Activated T-helper 1 cell treated with anti-CD3 and anti-CD28 coated beads, Interleukin-12 subunit alpha, Interleukin-12 subunit beta, Interleukin-2, Interleukin-4 antibody, amounts not matched to agents 30 ng/mL and 10 ng/mL and 1 ng/mL, durations not matched to agents 14 hours and 24 hours and 36 hours (primary cell): ENCODE measurements at regions of chr5 and their contacts with region 1.

Region 1: DNA sequence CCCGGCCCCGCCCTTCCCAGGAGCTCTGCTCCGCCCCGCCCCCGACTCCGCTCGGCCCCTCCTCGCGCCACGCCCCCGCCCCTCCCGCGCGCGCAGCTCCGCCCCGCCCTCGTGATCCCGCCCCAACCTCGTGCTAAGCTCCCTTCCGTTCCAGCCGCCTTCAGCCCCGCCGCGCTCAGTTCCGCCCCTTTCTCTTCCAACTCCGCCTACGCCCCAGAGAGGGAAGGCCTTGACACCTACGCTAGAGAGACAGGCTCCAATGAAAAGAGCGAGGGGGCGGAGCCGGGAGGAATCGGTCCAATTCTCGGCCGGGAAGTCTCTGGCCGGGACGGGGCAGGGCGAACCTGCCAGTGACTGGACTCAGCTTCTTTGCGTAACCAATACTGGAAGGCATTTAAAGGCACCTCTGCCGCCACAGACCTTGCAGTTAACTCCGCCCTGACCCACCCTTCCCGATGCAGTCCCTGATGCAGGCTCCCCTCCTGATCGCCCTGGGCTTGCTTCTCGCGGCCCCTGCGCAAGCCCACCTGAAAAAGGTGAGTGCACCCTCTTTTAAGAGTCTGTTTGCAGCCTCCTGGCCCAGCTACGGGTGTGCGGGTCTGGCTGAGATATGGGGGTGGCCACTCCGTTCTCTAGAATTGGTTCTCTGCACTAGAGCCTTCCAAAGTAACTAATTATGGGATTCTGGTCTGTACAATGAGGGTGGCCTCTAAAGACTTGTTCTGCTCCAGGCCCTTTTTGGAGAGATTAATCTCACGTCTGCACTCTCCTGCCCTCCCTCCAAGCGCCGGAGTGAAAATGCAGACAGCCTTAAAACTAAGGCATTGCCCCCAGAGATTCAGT is at the start of gene GM2A:
- DNase-seq: peak; percentile 99
- H3K4me3 Mint-ChIP-seq: peak within 1 kb of the TSS; percentile 87
- H3K27ac Mint-ChIP-seq: peak within 1 kb of the TSS; percentile 88
- H3K4me1 Mint-ChIP-seq: peaks cover 44% of the 10 kb centered on the region
- H3K27me3 Mint-ChIP-seq: peaks cover 2% of the 10 kb centered on the region
- total RNA-seq, gene GM2A: 16.9 and 21.1 TPM in 2 replicates

Region 2: DNA sequence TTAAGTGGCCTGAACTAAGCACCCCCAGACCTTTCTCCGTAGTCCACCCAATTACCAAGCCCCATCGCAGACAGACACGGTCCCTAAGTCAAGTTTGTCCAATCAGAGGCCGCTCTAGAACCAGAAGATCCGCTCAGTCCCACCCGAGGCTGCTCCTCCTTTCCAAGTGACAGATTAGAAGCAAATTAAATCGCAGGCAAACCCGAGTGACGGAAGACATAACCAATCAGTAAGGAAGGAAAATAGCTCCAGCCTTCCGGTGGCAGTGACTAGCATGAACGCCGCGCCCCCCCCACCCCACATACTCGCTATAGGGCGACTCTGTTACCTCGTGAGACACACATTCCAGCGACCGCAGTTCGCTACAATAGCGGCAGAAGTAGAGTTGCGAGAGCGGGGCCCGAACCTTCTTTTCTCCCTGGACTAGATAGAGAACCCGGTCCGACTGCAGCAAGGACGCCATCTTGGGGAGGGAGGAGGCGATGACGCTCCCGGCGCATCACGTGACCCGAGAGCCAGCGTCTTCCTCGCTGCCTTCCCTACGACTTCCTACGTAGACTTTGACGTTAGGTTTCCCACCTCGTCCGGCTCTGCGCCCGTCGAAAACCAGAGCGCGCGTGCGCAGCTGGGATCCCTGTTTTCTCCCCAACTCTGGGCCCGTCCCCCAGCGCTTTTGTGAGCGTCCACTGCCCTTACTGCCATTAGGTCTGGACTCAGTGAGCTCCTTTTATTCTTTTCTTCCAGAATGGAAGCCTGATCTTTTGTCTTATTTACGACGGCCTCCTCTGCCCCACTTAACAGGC is 494.3 kb before region 1 on chr5 and contains the start of gene DCTN4:
- intact Hi-C with region 1: loop called (anchors 5 kb)
- DNase-seq: peak; percentile 90
- H3K4me3 Mint-ChIP-seq: no peak within 1 kb of the TSS
- H3K27ac Mint-ChIP-seq: no peak within 1 kb of the TSS
- H3K4me1 Mint-ChIP-seq: peaks cover 34% of the 10 kb centered on the region
- H3K27me3 Mint-ChIP-seq: peaks cover 2% of the 10 kb centered on the region
- total RNA-seq, gene DCTN4: 42.3 and 46.4 TPM in 2 replicates

Region 3: GRCh38 chr5:151213800-151214613 is 39.0 kb before region 1 on chr5:
- intact Hi-C with region 1: loop called (anchors 1 kb)
- DNase-seq: peak; percentile 83
- H3K4me3 Mint-ChIP-seq: peak overlapping the region; percentile 87
- H3K27ac Mint-ChIP-seq: peak overlapping the region; percentile 93
- H3K4me1 Mint-ChIP-seq: peaks cover 81% of the 10 kb centered on the region
- H3K27me3 Mint-ChIP-seq: no peaks in the 10 kb centered on the region

Region 4: GRCh38 chr5:151234476-151235238 is 18.3 kb before region 1 on chr5:
- intact Hi-C with region 1: no loop called
- DNase-seq: no peak
- H3K4me3 Mint-ChIP-seq: no peak overlapping the region
- H3K27ac Mint-ChIP-seq: no peak overlapping the region
- H3K4me1 Mint-ChIP-seq: peaks cover 18% of the 10 kb centered on the region
- H3K27me3 Mint-ChIP-seq: no peaks in the 10 kb centered on the region

Region 5: DNA sequence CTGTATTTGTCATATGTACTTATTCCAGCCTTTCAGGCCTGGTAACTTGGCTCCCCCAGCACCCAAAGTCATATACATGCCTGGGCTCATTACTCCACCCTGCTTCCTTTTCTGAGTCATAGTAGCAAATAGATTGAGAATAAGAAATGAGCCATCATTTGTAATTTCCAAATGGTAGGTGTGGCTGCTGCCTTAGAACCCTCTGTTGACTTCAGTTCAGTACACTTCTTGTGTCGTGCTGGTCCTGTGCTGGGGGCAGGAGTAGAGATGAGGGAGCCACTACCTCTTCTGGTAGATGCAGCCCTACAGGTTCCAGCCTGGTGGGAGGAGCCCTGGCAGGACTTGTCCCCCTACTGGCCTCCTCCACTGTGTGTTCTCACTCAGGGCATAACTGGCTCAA is 11.1 kb after region 1 on chr5:
- intact Hi-C with region 1: loop called (anchors 1 kb)
- DNase-seq: no peak
- H3K4me3 Mint-ChIP-seq: no peak overlapping the region
- H3K27ac Mint-ChIP-seq: peak overlapping the region; percentile 84
- H3K4me1 Mint-ChIP-seq: peaks cover 13% of the 10 kb centered on the region
- H3K27me3 Mint-ChIP-seq: no peaks in the 10 kb centered on the region

Region 6: GRCh38 chr5:151447174-151448037 is 194.4 kb after region 1 on chr5 and contains the start of gene SLC36A1:
- intact Hi-C with region 1: loop called (anchors 5 kb)
- DNase-seq: peak; percentile 88
- H3K4me3 Mint-ChIP-seq: peak within 1 kb of the TSS; percentile 98
- H3K27ac Mint-ChIP-seq: peak within 1 kb of the TSS; percentile 96
- H3K4me1 Mint-ChIP-seq: peaks cover 31% of the 10 kb centered on the region
- H3K27me3 Mint-ChIP-seq: peaks cover 25% of the 10 kb centered on the region
- total RNA-seq, gene SLC36A1: 5.8 and 7.9 TPM in 2 replicates

Region 7: DNA sequence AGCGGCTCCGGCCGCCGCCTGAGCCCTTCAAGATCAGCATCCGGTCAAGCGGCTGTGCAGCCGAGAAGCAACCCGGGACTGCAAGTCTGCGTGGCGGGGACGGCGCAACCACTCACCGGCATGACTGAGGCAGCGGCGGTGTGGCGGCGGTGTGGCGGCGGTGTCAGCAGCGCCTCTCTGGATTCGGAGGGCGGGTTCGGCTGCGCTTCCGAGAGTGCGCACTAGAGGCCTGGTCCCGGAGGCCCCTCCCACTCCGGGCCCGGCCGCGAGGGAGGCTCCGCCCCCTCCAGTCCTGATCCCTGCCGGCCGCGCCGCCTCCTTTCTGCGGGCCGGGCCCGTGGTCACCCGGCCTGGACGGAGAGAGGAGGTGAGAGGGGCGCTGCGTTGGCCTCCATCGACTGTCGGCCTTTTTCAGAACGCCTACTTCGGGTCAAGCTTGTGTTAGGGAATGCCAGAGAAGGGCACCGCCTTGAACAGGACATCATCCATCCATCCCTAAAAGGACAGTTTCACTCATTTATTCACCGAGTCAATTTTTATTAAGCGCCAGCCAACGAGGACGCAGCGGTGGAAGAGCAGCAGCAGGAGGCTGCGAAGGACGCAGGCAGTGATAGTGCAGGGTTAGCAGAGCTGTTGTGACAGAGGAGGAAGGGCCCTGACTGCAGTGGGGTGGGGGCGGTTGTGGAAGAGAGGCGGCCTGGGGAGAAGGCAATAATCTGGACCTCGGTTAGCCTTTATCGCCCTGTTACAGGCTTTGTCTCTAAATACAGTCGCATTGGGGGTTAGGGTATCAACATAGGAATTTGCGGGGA is 505.7 kb after region 1 on chr5 and contains the start of gene ATOX1:
- intact Hi-C with region 1: loop called (anchors 2 kb)
- DNase-seq: peak; percentile 90
- H3K4me3 Mint-ChIP-seq: peak within 1 kb of the TSS; percentile 87
- H3K27ac Mint-ChIP-seq: peak within 1 kb of the TSS; percentile 92
- H3K4me1 Mint-ChIP-seq: peaks cover 43% of the 10 kb centered on the region
- H3K27me3 Mint-ChIP-seq: no peaks in the 10 kb centered on the region
- total RNA-seq, gene ATOX1: 72.5 and 83.7 TPM in 2 replicates